HEK293T (cell line): ENCODE measurements at regions of chr16 and their contacts with region 1.

Region 1: GRCh38 chr16:56341656-56342399 is 83.5 kb downstream of the AMFR start:
- DNase-seq: no peak

Region 2: DNA sequence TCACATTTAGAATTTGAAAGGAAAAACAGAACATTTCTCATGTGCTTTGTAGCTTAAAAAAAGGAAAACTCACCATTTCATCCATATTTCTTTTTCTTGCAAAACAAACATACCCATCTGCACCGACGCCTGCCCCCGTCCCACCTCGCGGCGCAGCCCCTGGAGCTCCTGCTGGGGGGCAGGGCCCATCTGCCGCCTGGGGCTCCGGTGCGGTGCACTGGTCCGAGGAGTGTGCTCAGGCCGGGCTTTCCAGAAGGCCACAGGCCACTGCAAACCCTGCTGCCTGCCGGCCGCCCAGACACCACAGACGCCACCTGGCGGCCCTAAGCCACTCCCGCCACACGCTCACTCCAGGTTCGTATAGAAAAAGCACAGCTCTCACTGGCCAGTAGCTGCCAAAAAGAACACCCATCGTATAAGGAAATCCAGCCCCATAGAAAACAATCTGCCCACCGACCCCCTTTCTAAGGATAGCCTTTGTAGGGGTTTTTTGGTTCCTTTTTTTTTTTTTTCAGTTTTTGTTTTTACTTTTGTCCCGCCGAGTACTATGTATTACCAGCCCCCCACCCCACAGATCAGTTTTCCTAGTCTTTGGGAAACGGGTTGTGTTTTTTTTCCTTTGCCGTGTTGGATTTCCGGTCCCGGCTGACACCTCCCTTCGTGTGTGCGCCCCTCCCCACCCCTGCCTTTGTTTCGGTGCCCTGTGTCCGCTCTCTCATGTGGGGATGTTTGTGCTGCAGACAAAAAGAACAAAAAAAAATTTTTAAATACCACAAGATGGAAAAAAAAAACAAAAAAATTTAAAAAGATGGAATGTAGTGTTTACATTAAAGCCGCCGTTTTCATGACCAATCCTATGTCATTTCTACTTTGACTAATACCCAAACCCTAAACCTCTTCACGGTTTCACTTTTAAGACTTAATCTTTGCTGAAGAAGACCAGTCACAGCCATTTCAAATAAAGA is 14.7 kb after region 1 on chr16:
- CTCF ChIA-PET with region 1: interaction called, 16 read pairs
- POLR2A ChIA-PET with region 1: no interaction called
- DNase-seq: peak; percentile 90

Region 3: GRCh38 chr16:56519459-56520250 is 177.8 kb after region 1 on chr16 and contains the start of gene BBS2:
- CTCF ChIA-PET with region 1: no interaction called
- POLR2A ChIA-PET with region 1: no interaction called
- DNase-seq: peak; percentile 91